Esophagus muscularis mucosa (tissue), 4 donors: ENCODE measurements at regions of chr7 and their contacts with region 1.

Region 1: DNA sequence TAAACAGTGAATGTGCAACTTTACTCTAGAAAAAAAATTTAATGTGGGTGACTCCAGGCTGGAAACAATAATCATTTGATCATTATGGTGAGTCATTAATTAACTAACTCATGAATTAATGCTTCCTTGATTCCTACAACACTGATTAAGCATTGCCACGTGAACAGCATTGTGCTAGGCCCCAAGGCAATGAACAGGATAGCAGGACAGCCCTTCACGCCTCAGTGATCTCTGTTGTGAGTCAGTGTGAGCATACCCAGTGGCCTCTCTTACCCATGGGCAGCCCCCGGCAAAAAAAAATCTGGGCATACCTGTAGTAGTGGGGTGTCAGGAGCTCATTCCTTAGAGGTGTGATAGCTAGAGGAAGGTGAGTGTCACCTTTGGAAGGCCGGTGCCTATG is 76.0 kb downstream of the DENND2A start:
- DNase-seq: no peak
- H3K4me3 ChIP-seq: no peak overlapping the region
- H3K27ac ChIP-seq: peak overlapping the region; percentile 88 to 91 (median 89)
- H3K4me1 ChIP-seq: peaks cover 36 to 82% (median 75%) of the 10 kb centered on the region in 4 donors
- H3K27me3 ChIP-seq: no peaks in the 10 kb centered on the region
- CTCF ChIP-seq: no peak
- EP300 ChIP-seq: no peak
- POLR2A ChIP-seq: no peak

Region 2: GRCh38 chr7:140517546-140518369 is 46.9 kb before region 1 on chr7:
- intact Hi-C with region 1: no loop called
- DNase-seq: no peak
- H3K4me3 ChIP-seq: no peak overlapping the region
- H3K27ac ChIP-seq: peak overlapping the region; percentile 78 to 86 (median 84)
- H3K4me1 ChIP-seq: peaks cover 19 to 35% (median 32%) of the 10 kb centered on the region in 4 donors
- H3K27me3 ChIP-seq: no peaks in the 10 kb centered on the region
- CTCF ChIP-seq: peak; percentile 88 to 89 (median 88)
- EP300 ChIP-seq: no peak
- POLR2A ChIP-seq: no peak

Region 3: DNA sequence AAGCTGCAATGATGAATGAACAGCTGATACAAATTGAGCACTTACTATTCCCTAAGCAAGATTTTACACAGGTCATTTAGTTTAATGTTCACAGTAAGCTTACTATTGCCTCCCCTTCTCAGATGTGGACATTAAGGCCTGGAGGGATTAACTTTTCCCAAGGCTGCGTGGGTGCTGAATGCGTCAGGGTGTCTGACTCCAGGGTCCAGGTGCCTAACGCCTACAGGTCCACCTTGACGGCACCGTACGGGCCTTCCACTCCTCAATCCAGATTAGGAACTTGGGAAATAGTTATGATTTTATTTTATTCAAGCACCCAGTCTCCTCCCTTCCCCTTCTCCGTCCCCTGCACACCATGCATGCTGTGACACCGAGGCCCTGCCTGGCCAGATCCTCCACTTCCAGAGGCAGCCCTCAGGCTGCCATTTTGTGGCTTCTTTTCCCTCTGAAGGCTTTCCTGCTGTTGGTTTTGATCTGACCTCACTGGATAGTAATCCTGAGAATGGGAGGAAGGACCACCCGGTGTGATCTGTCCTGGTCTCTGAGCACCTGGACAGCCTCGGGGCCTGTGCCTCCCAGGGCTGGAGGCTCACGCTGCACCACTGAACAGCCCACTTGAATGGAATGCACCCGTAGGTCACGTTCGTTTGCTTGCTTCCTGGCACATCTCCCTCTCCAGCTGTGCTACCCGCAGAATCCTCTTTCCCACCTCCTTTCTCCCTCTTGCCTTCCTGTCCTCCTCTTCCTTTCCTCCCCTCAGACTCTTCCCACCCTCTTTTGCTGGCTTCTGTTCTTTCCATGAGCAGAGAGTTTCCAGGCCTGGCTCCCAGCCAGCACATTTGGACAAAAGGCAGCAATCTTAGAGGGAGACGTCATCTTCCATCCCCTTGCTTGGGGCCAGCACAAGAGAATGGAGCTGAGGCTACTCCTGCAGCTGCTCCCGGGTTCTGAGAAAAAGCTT is 61.5 kb after region 1 on chr7:
- intact Hi-C with region 1: no loop called
- DNase-seq: peak; percentile 97
- H3K4me3 ChIP-seq: peak overlapping the region in 1 of 4 donors; percentile 2
- H3K27ac ChIP-seq: peak overlapping the region; percentile 80 to 98 (median 84)
- H3K4me1 ChIP-seq: peaks cover 38 to 95% (median 90%) of the 10 kb centered on the region in 4 donors
- H3K27me3 ChIP-seq: no peaks in the 10 kb centered on the region
- CTCF ChIP-seq: no peak
- EP300 ChIP-seq: no peak
- POLR2A ChIP-seq: no peak

Region 4: GRCh38 chr7:140640727-140641523 is 76.3 kb after region 1 on chr7 and contains the start of gene DENND2A:
- intact Hi-C with region 1: loop called (anchors 2 kb)
- DNase-seq: no peak
- H3K4me3 ChIP-seq: peak within 1 kb of the TSS; percentile 68 to 92 (median 88)
- H3K27ac ChIP-seq: peak within 1 kb of the TSS; percentile 91 to 98 (median 97)
- H3K4me1 ChIP-seq: peaks cover 39 to 72% (median 70%) of the 10 kb centered on the region in 4 donors
- H3K27me3 ChIP-seq: peaks cover 0 to 3% (median 0%) of the 10 kb centered on the region in 4 donors
- CTCF ChIP-seq: no peak
- EP300 ChIP-seq: peak; percentile 56
- POLR2A ChIP-seq: no peak
- total RNA-seq, gene DENND2A: 46.4 to 77.2 (median 59.2) TPM

Region 5: GRCh38 chr7:140656548-140657515 is 92.2 kb after region 1 on chr7:
- intact Hi-C with region 1: no loop called
- DNase-seq: no peak
- H3K4me3 ChIP-seq: peak overlapping the region; percentile 38 to 48 (median 42)
- H3K27ac ChIP-seq: peak overlapping the region; percentile 54 to 74 (median 68)
- H3K4me1 ChIP-seq: peaks cover 27 to 32% (median 31%) of the 10 kb centered on the region in 4 donors
- H3K27me3 ChIP-seq: no peaks in the 10 kb centered on the region
- CTCF ChIP-seq: no peak
- EP300 ChIP-seq: no peak
- POLR2A ChIP-seq: no peak

Region 6: DNA sequence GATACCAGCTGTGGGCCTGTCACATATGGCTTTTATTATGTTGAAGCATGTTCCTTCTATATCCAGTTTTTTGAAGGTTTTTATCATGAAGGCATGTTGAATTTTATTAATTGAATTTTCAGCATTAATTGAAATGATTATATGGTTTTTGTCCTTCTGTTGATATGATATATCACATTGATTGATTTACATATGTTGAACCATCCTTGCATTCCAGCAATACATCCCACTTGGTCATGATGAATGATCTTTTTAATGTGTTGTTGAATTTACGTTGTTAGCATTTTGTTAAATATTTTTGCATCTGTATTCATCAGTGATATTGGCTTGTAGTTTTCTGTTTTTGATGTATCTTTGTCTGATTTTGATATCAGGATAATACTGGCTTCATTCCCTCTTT is 1255.4 kb after region 1 on chr7:
- intact Hi-C with region 1: no loop called
- DNase-seq: no peak
- H3K4me3 ChIP-seq: no peak overlapping the region
- H3K27ac ChIP-seq: no peak overlapping the region
- H3K4me1 ChIP-seq: no peaks in the 10 kb centered on the region
- H3K27me3 ChIP-seq: no peaks in the 10 kb centered on the region
- CTCF ChIP-seq: no peak
- EP300 ChIP-seq: no peak
- POLR2A ChIP-seq: no peak